ENCODE measurements at regions of chr1 and their contacts with region 1.

Region 1: GRCh38 chr1:165914136-165914798 is 86.9 kb downstream of the UCK2 start:
- DNase-seq: no peak
- H3K4me3 ChIP-seq: no peak overlapping the region
- H3K27ac ChIP-seq: no peak overlapping the region
- H3K4me1 ChIP-seq: peaks cover 5 to 24% (median 12%) of the 10 kb centered on the region in 4 donors
- H3K27me3 ChIP-seq: no peaks in the 10 kb centered on the region
- CTCF ChIP-seq: peak; percentile 81 to 91 (median 84)
- EP300 ChIP-seq: no peak
- POLR2A ChIP-seq: no peak

Region 2: GRCh38 chr1:165392634-165393571 is 521.4 kb before region 1 on chr1:
- intact Hi-C with region 1: loop called (anchors 5 kb)
- DNase-seq: peak; percentile 94
- H3K4me3 ChIP-seq: peak overlapping the region; percentile 27 to 48 (median 32)
- H3K27ac ChIP-seq: no peak overlapping the region
- H3K4me1 ChIP-seq: peaks cover 5 to 16% (median 14%) of the 10 kb centered on the region in 4 donors
- H3K27me3 ChIP-seq: no peaks in the 10 kb centered on the region
- CTCF ChIP-seq: peak; percentile 92 to 97 (median 95)
- EP300 ChIP-seq: no peak
- POLR2A ChIP-seq: no peak

Region 3: GRCh38 chr1:165597883-165598675 is 316.2 kb before region 1 on chr1:
- intact Hi-C with region 1: loop called (anchors 2 kb)
- DNase-seq: peak; percentile 99
- H3K4me3 ChIP-seq: peak overlapping the region; percentile 58 to 66 (median 60)
- H3K27ac ChIP-seq: peak overlapping the region; percentile 65 to 80 (median 72)
- H3K4me1 ChIP-seq: peaks cover 4 to 15% (median 11%) of the 10 kb centered on the region in 4 donors
- H3K27me3 ChIP-seq: peaks cover 0 to 8% (median 0%) of the 10 kb centered on the region in 4 donors
- CTCF ChIP-seq: no peak
- EP300 ChIP-seq: no peak
- POLR2A ChIP-seq: no peak

Region 4: GRCh38 chr1:165717918-165718515 is 196.2 kb before region 1 on chr1:
- intact Hi-C with region 1: loop called (anchors 1 kb)
- DNase-seq: no peak
- H3K4me3 ChIP-seq: no peak overlapping the region
- H3K27ac ChIP-seq: no peak overlapping the region
- H3K4me1 ChIP-seq: no peaks in the 10 kb centered on the region
- H3K27me3 ChIP-seq: no peaks in the 10 kb centered on the region
- CTCF ChIP-seq: peak; percentile 33 to 52 (median 37)
- EP300 ChIP-seq: no peak
- POLR2A ChIP-seq: no peak

Region 5: GRCh38 chr1:165768513-165769394 is 145.5 kb before region 1 on chr1 and contains the start of gene TMCO1:
- intact Hi-C with region 1: loop called (anchors 5 kb)
- DNase-seq: peak; percentile 98
- H3K4me3 ChIP-seq: peak within 1 kb of the TSS; percentile 59 to 93 (median 82)
- H3K27ac ChIP-seq: peak within 1 kb of the TSS; percentile 83 to 94 (median 87)
- H3K4me1 ChIP-seq: peaks cover 19 to 47% (median 41%) of the 10 kb centered on the region in 4 donors
- H3K27me3 ChIP-seq: no peaks in the 10 kb centered on the region
- CTCF ChIP-seq: peak; percentile 5 to 25 (median 12)
- EP300 ChIP-seq: no peak
- POLR2A ChIP-seq: no peak
- total RNA-seq, gene TMCO1: 36.0 to 45.7 (median 37.8) TPM

Region 6: GRCh38 chr1:165827268-165828102 is 86.8 kb before region 1 on chr1 and contains the start of gene UCK2:
- intact Hi-C with region 1: loop called (anchors 5 kb)
- DNase-seq: peak; percentile 93
- H3K4me3 ChIP-seq: peak within 1 kb of the TSS; percentile 78 to 93 (median 86)
- H3K27ac ChIP-seq: peak within 1 kb of the TSS; percentile 88 to 97 (median 90)
- H3K4me1 ChIP-seq: peaks cover 14 to 24% (median 19%) of the 10 kb centered on the region in 4 donors
- H3K27me3 ChIP-seq: no peaks in the 10 kb centered on the region
- CTCF ChIP-seq: peak in 1 of 3 experiments; percentile 18
- EP300 ChIP-seq: no peak
- POLR2A ChIP-seq: peak; percentile 63
- total RNA-seq, gene UCK2: 13.7 to 33.7 (median 31.0) TPM